CD8-positive, alpha-beta T cell (primary cell): ENCODE measurements at regions of chr6 and their contacts with region 1.

Region 1: GRCh38 chr6:85678602-85679444 is 36.1 kb upstream of the SYNCRIP start:
- DNase-seq: peak; percentile 95 to 100 (median 98)
- ATAC-seq: peak; percentile 87
- H3K4me3 ChIP-seq: peak overlapping the region; percentile 83 to 98
- H3K4me3 Mint-ChIP-seq: peak overlapping the region; percentile 99
- H3K27ac ChIP-seq: peak overlapping the region; percentile 88 to 96
- H3K27ac Mint-ChIP-seq: peak overlapping the region; percentile 96
- H3K4me1 ChIP-seq: peaks cover 32% of the 10 kb centered on the region
- H3K4me1 Mint-ChIP-seq: peaks cover 42% of the 10 kb centered on the region
- H3K27me3 ChIP-seq: no peaks in the 10 kb centered on the region
- H3K27me3 Mint-ChIP-seq: no peaks in the 10 kb centered on the region
- CTCF ChIP-seq: no peak

Region 2: GRCh38 chr6:84227434-84228197 is 1451.2 kb before region 1 on chr6 and contains the start of gene CEP162:
- CTCF ChIA-PET with region 1: no interaction called
- POLR2A ChIA-PET with region 1: interaction called, 11 read pairs
- intact Hi-C with region 1: loop called (anchors 2 to 10 kb)
- DNase-seq: peak; percentile 77 to 93 (median 90)
- ATAC-seq: peak; percentile 92
- H3K4me3 ChIP-seq: peak within 1 kb of the TSS; percentile 91 to 92
- H3K4me3 Mint-ChIP-seq: peak within 1 kb of the TSS; percentile 100
- H3K27ac ChIP-seq: peak within 1 kb of the TSS; percentile 58 to 72
- H3K27ac Mint-ChIP-seq: peak within 1 kb of the TSS; percentile 95
- H3K4me1 ChIP-seq: peaks cover 5% of the 10 kb centered on the region
- H3K4me1 Mint-ChIP-seq: peaks cover 23% of the 10 kb centered on the region
- H3K27me3 ChIP-seq: no peaks in the 10 kb centered on the region
- H3K27me3 Mint-ChIP-seq: peaks cover 10% of the 10 kb centered on the region
- CTCF ChIP-seq: peak; percentile 88
- total RNA-seq, gene CEP162: 2.0 to 2.6 TPM

Region 3: DNA sequence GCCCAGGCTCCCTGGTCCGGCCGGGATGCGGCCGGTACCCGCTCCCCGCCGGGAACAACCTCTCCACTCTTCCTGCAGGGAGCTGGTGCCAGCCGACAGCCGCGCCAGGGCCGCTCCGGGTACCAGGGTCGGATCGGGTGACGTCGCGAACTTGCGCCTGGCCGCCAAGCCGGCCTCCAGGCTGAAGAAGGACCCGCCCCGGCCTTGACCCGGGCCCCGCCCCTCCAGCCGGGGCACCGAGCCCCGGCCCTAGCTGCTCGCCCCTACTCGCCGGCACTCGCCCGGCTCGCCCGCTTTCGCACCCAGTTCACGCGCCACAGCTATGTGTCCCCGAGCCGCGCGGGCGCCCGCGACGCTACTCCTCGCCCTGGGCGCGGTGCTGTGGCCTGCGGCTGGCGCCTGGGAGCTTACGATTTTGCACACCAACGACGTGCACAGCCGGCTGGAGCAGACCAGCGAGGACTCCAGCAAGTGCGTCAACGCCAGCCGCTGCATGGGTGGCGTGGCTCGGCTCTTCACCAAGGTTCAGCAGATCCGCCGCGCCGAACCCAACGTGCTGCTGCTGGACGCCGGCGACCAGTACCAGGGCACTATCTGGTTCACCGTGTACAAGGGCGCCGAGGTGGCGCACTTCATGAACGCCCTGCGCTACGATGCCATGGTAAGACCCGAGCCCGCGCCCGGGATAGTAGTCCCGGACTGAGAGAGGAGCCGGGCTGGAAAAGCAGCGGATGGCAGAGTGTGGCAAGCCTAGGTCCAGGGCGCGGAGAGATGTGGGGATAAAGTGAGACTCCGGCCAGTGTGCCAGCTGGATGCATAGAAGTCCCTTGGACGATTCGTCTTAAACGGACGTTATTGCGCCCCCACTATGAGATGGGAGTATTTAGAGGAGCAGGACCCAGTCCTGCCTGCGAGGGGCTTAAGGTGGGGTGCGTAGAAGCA is 228.7 kb before region 1 on chr6 and contains the start of gene NT5E:
- CTCF ChIA-PET with region 1: no interaction called
- POLR2A ChIA-PET with region 1: interaction called, 31 read pairs
- intact Hi-C with region 1: loop called in 1 of 2 experiments (anchors 10 kb)
- DNase-seq: peak; percentile 19 to 78 (median 61)
- ATAC-seq: peak; percentile 58
- H3K4me3 ChIP-seq: peak within 1 kb of the TSS; percentile 64 to 65
- H3K4me3 Mint-ChIP-seq: peak within 1 kb of the TSS; percentile 98
- H3K27ac ChIP-seq: peak within 1 kb of the TSS; percentile 40 to 71
- H3K27ac Mint-ChIP-seq: peak within 1 kb of the TSS; percentile 97
- H3K4me1 ChIP-seq: peaks cover 44% of the 10 kb centered on the region
- H3K4me1 Mint-ChIP-seq: peaks cover 62% of the 10 kb centered on the region
- H3K27me3 ChIP-seq: peaks cover 0 to 6% of the 10 kb centered on the region in 2 experiments
- H3K27me3 Mint-ChIP-seq: no peaks in the 10 kb centered on the region
- CTCF ChIP-seq: no peak
- total RNA-seq, gene NT5E: 12.7 to 13.0 TPM

Region 4: GRCh38 chr6:85593438-85594196 is 85.2 kb before region 1 on chr6 and contains the start of gene SNX14:
- CTCF ChIA-PET with region 1: interaction called, 5 read pairs
- POLR2A ChIA-PET with region 1: interaction called, 67 read pairs
- intact Hi-C with region 1: loop called (anchors 1 kb)
- DNase-seq: peak; percentile 59 to 90 (median 76)
- ATAC-seq: peak; percentile 78
- H3K4me3 ChIP-seq: peak within 1 kb of the TSS; percentile 90 to 95
- H3K4me3 Mint-ChIP-seq: peak within 1 kb of the TSS; percentile 97
- H3K27ac ChIP-seq: peak within 1 kb of the TSS; percentile 84 to 88
- H3K27ac Mint-ChIP-seq: peak within 1 kb of the TSS; percentile 98
- H3K4me1 ChIP-seq: peaks cover 20% of the 10 kb centered on the region
- H3K4me1 Mint-ChIP-seq: peaks cover 53% of the 10 kb centered on the region
- H3K27me3 ChIP-seq: no peaks in the 10 kb centered on the region
- H3K27me3 Mint-ChIP-seq: no peaks in the 10 kb centered on the region
- CTCF ChIP-seq: no peak
- total RNA-seq, gene SNX14: 34.2 to 38.1 TPM

Region 5: GRCh38 chr6:85620308-85620707 is 58.5 kb before region 1 on chr6:
- CTCF ChIA-PET with region 1: no interaction called
- POLR2A ChIA-PET with region 1: interaction called, 6 read pairs
- intact Hi-C with region 1: loop called in 1 of 2 experiments (anchors 10 kb)
- DNase-seq: no peak
- ATAC-seq: no peak
- H3K4me3 ChIP-seq: no peak overlapping the region
- H3K4me3 Mint-ChIP-seq: no peak overlapping the region
- H3K27ac ChIP-seq: no peak overlapping the region
- H3K27ac Mint-ChIP-seq: no peak overlapping the region
- H3K4me1 ChIP-seq: no peaks in the 10 kb centered on the region
- H3K4me1 Mint-ChIP-seq: peaks cover 31% of the 10 kb centered on the region
- H3K27me3 ChIP-seq: no peaks in the 10 kb centered on the region
- H3K27me3 Mint-ChIP-seq: no peaks in the 10 kb centered on the region
- CTCF ChIP-seq: no peak

Region 6: DNA sequence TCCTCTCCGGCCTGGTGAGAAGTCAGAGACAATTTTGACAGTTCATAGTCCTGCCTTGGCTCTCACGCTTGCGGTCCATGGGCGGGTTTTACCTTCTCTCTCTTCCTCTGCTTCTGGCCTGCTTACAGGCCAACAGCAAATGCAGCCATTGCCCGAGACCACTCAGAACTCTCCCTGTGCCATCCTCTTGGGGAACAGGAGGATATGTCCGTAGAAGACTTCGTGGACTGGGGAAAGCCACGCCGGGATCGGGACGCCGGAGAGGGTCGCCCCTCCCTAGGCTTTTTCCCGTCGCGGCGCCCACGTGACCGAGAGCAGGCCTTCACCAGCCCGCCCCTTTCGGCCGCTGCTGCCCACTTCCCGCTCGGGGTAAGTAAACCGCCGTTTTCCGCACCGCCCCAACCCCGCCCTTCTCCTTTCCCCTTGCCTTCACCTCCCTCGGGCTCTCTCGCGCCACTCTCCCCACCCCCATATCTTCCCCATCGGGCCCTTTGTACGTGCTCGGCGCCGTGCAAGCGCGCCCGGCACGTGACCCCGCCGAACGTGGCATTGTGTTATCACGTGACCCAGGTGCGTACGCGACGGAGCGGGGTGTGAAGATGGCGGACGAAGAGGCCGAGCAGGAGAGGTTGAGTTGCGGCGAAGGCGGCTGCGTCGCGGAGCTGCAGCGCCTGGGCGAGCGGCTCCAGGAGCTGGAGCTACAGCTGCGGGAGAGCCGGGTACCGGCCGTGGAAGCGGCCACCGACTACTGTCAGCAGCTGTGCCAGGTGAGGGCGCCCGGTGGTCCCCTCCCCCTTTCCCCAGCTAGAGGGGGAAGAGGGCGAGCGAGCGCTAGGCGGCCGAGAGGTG is 1476.4 kb after region 1 on chr6 and contains the start of gene ZNF292:
- CTCF ChIA-PET with region 1: no interaction called
- POLR2A ChIA-PET with region 1: no interaction called
- intact Hi-C with region 1: loop called (anchors 5 to 10 kb)
- DNase-seq: peak; percentile 85 to 98 (median 95)
- ATAC-seq: peak; percentile 67
- H3K4me3 ChIP-seq: peak within 1 kb of the TSS; percentile 73 to 80
- H3K4me3 Mint-ChIP-seq: peak within 1 kb of the TSS; percentile 96
- H3K27ac ChIP-seq: peak within 1 kb of the TSS; percentile 85 to 95
- H3K27ac Mint-ChIP-seq: peak within 1 kb of the TSS; percentile 98
- H3K4me1 ChIP-seq: peaks cover 54% of the 10 kb centered on the region
- H3K4me1 Mint-ChIP-seq: peaks cover 58% of the 10 kb centered on the region
- H3K27me3 ChIP-seq: no peaks in the 10 kb centered on the region
- H3K27me3 Mint-ChIP-seq: no peaks in the 10 kb centered on the region
- CTCF ChIP-seq: no peak
- total RNA-seq, gene ZNF292: 82.6 to 87.6 TPM

Region 7: GRCh38 chr6:87407901-87408720 is 1729.3 kb after region 1 on chr6 and contains the start of gene CFAP206:
- CTCF ChIA-PET with region 1: no interaction called
- POLR2A ChIA-PET with region 1: no interaction called
- intact Hi-C with region 1: loop called in 1 of 2 experiments (anchors 10 kb)
- DNase-seq: peak; percentile 50 to 90 (median 77)
- ATAC-seq: peak; percentile 77
- H3K4me3 ChIP-seq: peak within 1 kb of the TSS; percentile 65 to 91
- H3K4me3 Mint-ChIP-seq: peak within 1 kb of the TSS; percentile 87
- H3K27ac ChIP-seq: peak within 1 kb of the TSS; percentile 64 to 71
- H3K27ac Mint-ChIP-seq: peak within 1 kb of the TSS; percentile 57
- H3K4me1 ChIP-seq: peaks cover 10% of the 10 kb centered on the region
- H3K4me1 Mint-ChIP-seq: peaks cover 7% of the 10 kb centered on the region
- H3K27me3 ChIP-seq: peaks cover 3 to 5% of the 10 kb centered on the region in 2 experiments
- H3K27me3 Mint-ChIP-seq: peaks cover 17% of the 10 kb centered on the region
- CTCF ChIP-seq: no peak
- total RNA-seq, gene CFAP206: not detected